Heart left ventricle (tissue), 16 donors: ENCODE measurements at regions of chrX and their contacts with region 1.

Region 1: DNA sequence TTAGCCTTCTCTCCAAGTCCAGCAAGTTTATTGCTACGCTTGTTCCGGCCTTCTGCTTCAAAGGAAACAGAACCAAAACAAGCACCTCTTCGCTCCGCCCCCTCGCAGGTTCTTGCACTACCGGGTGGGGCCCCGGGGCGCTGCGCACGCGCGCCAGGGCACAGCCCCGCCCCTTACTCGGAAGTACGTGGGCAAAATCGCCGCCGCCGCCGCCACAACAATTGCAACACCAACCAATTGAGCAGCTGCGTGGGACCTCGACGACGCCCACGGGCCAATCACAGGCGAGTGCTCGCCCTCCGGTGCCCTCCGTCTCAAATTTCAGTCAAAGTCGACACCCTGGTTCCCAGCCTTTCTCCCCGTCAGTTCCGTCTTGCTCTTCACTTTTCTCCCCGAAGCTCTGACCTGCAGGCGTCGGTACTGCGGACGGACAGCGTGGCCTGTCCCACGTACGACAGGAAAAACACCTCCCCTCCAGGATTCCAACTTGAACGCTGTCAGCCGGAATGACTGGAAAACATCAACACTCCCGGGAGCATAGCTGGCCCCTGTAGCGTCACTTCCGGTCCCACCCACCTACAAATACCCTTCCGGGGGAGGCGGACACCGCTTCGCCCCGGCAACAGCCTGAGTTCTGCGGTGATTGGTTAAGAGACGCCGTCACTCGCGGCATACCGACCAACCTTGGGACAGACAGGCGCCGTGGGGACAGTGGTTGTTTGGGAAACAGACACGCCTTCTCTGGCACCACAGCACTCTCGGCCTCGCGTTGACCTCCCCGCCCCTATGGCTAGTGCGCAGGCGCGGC is 624 bp upstream of the OTUD5 start:
- DNase-seq: peak; percentile 96 to 98 (median 97)
- ATAC-seq: peak; percentile 93 to 97 (median 96)
- H3K4me3 ChIP-seq: peak overlapping the region; percentile 49 to 87 (median 71)
- H3K27ac ChIP-seq: peak overlapping the region; percentile 87 to 99 (median 94)
- H3K4me1 ChIP-seq: peaks cover 0 to 42% (median 21%) of the 10 kb centered on the region in 12 donors
- H3K27me3 ChIP-seq: no peaks in the 10 kb centered on the region
- CTCF ChIP-seq: no peak
- POLR2A ChIP-seq: no peak

Region 2: GRCh38 chrX:49002091-49002935 is 44.3 kb after region 1 on chrX and contains the start of gene GRIPAP1:
- intact Hi-C with region 1: loop called in 1 of 10 experiments (anchors 5 kb)
- DNase-seq: peak; percentile 54 to 83 (median 76)
- ATAC-seq: peak; percentile 92 to 96 (median 92)
- H3K4me3 ChIP-seq: peak within 1 kb of the TSS; percentile 40 to 85 (median 72)
- H3K27ac ChIP-seq: peak within 1 kb of the TSS; percentile 62 to 95 (median 86)
- H3K4me1 ChIP-seq: peaks cover 0 to 6% (median 0%) of the 10 kb centered on the region in 12 donors
- H3K27me3 ChIP-seq: no peaks in the 10 kb centered on the region
- CTCF ChIP-seq: no peak
- POLR2A ChIP-seq: no peak
- total RNA-seq, gene GRIPAP1: 11.4 to 41.6 (median 18.9) TPM

Region 3: GRCh38 chrX:49100704-49101628 is 142.9 kb after region 1 on chrX:
- intact Hi-C with region 1: loop called in 1 of 10 experiments (anchors 10 kb)
- DNase-seq: peak; percentile 90 to 93 (median 93)
- ATAC-seq: peak; percentile 98 to 100 (median 99)
- H3K4me3 ChIP-seq: peak overlapping the region; percentile 34 to 84 (median 63)
- H3K27ac ChIP-seq: peak overlapping the region in 11 of 12 donors; percentile 66 to 84 (median 74)
- H3K4me1 ChIP-seq: peaks cover 0 to 15% (median 0%) of the 10 kb centered on the region in 12 donors
- H3K27me3 ChIP-seq: no peaks in the 10 kb centered on the region
- CTCF ChIP-seq: no peak
- POLR2A ChIP-seq: peak in 1 of 2 donors; percentile 62

Region 4: DNA sequence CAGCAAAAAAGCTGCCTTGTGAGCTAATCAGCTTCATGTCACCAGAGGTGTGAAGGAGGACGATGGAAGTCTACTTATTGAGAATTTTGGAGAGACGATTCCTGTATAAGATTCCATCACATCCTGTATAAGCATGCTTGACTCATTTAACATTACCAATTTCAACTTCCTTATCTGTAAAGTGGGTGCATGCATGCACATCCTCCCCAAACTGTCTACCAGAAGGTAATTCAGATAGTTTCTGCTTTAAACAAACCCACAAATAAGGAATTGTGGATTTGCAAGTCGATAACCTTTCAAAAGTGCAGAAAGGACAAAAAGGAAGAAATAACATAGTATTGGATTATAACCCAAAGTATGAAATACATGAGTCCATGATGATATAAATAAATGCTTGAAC is 1211.7 kb after region 1 on chrX:
- intact Hi-C with region 1: no loop called
- DNase-seq: no peak
- ATAC-seq: no peak
- H3K4me3 ChIP-seq: no peak overlapping the region
- H3K27ac ChIP-seq: no peak overlapping the region
- H3K4me1 ChIP-seq: no peaks in the 10 kb centered on the region
- H3K27me3 ChIP-seq: peaks cover 0 to 11% (median 0%) of the 10 kb centered on the region in 9 donors
- CTCF ChIP-seq: no peak
- POLR2A ChIP-seq: no peak